Esophagus muscularis mucosa (tissue), 4 donors: ENCODE measurements at regions of chr5 and their contacts with region 1.

Region 1: DNA sequence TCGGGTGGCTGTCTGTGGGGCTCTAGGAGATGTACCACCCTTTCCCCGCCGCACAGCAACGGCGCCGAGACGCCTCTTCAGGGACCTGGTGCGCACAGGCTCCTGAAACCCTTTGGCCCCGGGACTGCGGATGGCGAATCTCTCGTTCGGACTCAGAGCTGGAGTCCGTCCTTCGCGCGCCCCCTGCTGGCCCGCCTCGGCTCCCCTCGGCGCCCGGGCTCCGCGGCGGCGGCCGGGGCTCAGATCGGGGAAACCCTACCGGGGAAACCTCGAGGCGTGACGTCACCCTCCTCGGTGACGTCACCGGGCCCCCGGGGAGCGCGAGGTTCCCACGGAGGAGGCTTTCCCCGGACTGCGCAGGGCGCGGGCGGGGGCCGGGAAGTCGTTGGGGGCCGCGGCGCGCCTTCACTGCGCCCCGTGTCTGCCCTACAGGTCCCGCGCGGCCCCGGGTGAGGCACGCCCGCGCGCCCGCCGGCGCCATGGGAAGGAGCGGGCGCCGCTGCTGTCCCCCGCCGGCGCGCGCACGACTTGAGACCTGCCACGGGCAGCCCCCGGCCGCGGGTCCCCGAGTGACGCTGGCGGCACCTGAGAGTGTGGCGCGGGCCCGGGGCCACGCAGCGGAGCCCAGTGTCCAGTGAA is 7.9 kb downstream of the PRR7 start:
- DNase-seq: peak; percentile 98
- H3K4me3 ChIP-seq: peak overlapping the region; percentile 62 to 73 (median 68)
- H3K27ac ChIP-seq: peak overlapping the region; percentile 70 to 83 (median 79)
- H3K4me1 ChIP-seq: peaks cover 25 to 49% (median 44%) of the 10 kb centered on the region in 4 donors
- H3K27me3 ChIP-seq: peaks cover 0 to 38% (median 5%) of the 10 kb centered on the region in 4 donors
- CTCF ChIP-seq: peak in 2 of 3 experiments; percentile 93 to 95
- EP300 ChIP-seq: no peak
- POLR2A ChIP-seq: no peak

Region 2: GRCh38 chr5:177311723-177312648 is 142.5 kb before region 1 on chr5 and contains the start of gene MXD3:
- intact Hi-C with region 1: loop called (anchors 10 kb)
- DNase-seq: peak; percentile 99
- H3K4me3 ChIP-seq: peak within 1 kb of the TSS; percentile 54 to 72 (median 61)
- H3K27ac ChIP-seq: peak within 1 kb of the TSS in 3 of 4 donors; percentile 13 to 79 (median 60)
- H3K4me1 ChIP-seq: peaks cover 20 to 45% (median 26%) of the 10 kb centered on the region in 4 donors
- H3K27me3 ChIP-seq: no peaks in the 10 kb centered on the region
- CTCF ChIP-seq: no peak
- EP300 ChIP-seq: no peak
- POLR2A ChIP-seq: no peak
- total RNA-seq, gene MXD3: 2.5 to 11.2 (median 7.9) TPM

Region 3: GRCh38 chr5:177390363-177391300 is 63.9 kb before region 1 on chr5:
- intact Hi-C with region 1: loop called (anchors 1 kb)
- DNase-seq: peak; percentile 95
- H3K4me3 ChIP-seq: no peak overlapping the region
- H3K27ac ChIP-seq: no peak overlapping the region
- H3K4me1 ChIP-seq: peaks cover 0 to 21% (median 13%) of the 10 kb centered on the region in 4 donors
- H3K27me3 ChIP-seq: peaks cover 0 to 32% (median 0%) of the 10 kb centered on the region in 4 donors
- CTCF ChIP-seq: peak in 2 of 3 experiments; percentile 96 to 97
- EP300 ChIP-seq: no peak
- POLR2A ChIP-seq: no peak

Region 4: GRCh38 chr5:177403792-177404640 is 50.5 kb before region 1 on chr5:
- intact Hi-C with region 1: loop called (anchors 1 kb)
- DNase-seq: peak; percentile 94
- H3K4me3 ChIP-seq: peak overlapping the region; percentile 53 to 58 (median 57)
- H3K27ac ChIP-seq: no peak overlapping the region
- H3K4me1 ChIP-seq: peaks cover 34 to 48% (median 42%) of the 10 kb centered on the region in 4 donors
- H3K27me3 ChIP-seq: peaks cover 13 to 72% (median 49%) of the 10 kb centered on the region in 4 donors
- CTCF ChIP-seq: peak; percentile 62 to 83 (median 74)
- EP300 ChIP-seq: no peak
- POLR2A ChIP-seq: no peak

Region 5: DNA sequence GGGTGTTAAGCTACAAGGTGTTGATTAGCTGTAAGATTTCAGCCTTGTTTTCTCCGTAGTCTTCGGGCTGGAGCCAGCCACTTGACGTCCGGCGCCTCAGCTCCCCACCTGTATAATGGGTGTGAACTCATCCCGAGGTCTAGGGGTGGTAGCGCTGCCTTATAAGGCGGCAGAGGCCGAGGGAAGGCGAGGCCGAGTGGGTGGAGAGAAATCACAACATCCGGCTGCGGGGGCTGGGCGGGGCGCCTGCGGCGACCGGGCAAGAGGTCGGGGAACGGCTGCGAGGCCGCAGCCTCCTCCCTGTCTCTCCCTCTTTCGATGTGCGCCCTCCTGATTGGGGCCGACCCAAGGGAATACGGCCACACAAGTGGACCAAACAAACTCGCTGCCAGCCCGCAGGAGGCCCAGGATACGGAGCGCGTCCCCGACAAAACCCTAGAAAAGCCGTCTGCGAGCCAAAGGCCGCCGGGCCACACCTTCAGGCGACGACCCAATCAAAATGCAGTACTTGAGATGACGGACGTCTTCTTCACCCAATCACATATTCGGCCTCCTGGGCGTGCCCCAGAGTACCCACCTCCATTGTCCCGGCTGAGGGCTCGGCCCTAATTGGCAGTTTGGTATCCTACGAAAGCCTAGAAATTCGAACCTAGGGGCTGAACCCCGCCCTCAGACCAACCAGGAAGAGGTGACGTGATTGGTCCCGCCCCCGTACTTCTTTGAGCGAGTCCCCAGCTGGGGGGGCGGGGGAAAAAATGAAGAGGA is 28.5 kb before region 1 on chr5:
- intact Hi-C with region 1: loop called (anchors 2 kb)
- DNase-seq: peak; percentile 100
- H3K4me3 ChIP-seq: peak overlapping the region; percentile 52 to 74 (median 61)
- H3K27ac ChIP-seq: peak overlapping the region; percentile 89
- H3K4me1 ChIP-seq: peaks cover 28 to 49% (median 47%) of the 10 kb centered on the region in 4 donors
- H3K27me3 ChIP-seq: no peaks in the 10 kb centered on the region
- CTCF ChIP-seq: peak in 1 of 3 experiments; percentile 3
- EP300 ChIP-seq: no peak
- POLR2A ChIP-seq: peak; percentile 69

Region 6: DNA sequence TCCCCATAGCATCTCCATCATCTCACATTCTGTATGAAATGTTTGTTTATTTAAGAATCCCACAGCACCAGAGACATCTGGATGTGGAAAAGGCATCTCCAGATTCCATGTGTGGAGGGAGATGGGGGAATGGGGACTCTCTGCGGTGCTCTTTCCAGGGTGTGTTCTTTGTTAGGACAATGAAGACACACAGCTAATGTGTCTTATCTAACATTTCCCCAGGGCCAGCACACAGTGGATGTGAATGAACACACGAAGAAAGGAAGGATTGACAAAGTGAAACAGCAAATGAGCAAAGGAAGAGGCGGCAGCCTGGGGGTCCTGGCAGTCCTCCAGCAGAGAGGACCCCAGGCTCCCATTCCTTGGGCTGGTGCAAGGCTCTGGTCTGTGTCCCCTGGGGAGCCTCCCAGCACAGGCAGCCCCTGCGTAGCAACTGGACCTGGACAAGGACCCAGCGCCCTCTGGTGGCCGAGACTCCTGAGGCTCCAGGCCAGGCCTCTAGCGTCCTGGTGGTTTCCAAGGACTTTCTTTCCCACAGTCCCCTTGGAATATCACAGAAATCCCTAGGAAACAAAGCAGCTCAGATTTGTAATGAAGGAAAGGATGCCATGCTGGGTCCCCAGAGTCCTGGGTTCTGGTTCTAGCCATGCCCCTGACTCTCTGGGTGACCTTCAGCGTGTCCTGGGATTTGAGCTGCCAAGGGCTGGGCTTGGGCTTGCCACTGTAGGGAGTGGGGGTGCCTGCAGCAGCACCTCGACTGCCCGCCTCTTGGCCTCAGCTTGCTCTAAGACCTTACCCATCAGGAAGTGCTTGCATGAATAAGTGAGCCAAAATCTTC is 46.4 kb after region 1 on chr5:
- intact Hi-C with region 1: loop called (anchors 2 kb)
- DNase-seq: peak; percentile 95
- H3K4me3 ChIP-seq: no peak overlapping the region
- H3K27ac ChIP-seq: peak overlapping the region; percentile 12 to 69 (median 54)
- H3K4me1 ChIP-seq: peaks cover 23 to 38% (median 34%) of the 10 kb centered on the region in 4 donors
- H3K27me3 ChIP-seq: no peaks in the 10 kb centered on the region
- CTCF ChIP-seq: peak; percentile 94 to 97 (median 95)
- EP300 ChIP-seq: no peak
- POLR2A ChIP-seq: no peak